ENCODE measurements at regions of chr1 and their contacts with region 1.

Region 1: DNA sequence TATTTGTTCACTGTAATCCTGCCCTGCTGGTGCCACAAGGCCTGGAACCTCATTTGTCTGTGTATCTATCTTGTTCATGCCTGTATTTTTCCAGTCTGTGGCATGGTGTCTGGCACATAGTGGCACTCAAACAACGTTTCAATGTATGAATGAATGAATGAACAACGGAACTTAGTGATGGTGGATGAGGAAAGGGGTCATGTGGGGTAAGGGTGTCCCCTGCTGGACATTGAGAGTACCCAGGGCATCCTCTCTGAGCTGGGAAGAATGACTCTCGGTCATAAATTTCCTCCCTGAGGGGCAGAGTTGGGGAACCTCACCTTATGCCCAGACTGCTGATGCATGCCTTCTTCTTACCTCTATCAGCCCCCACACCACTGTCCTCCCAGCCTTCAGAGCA is 18.9 kb upstream of the ZNF683 start:
- DNase-seq: peak; percentile 86
- H3K4me3 Mint-ChIP-seq: no peak overlapping the region
- H3K27ac Mint-ChIP-seq: no peak overlapping the region
- H3K4me1 Mint-ChIP-seq: peaks cover 41% of the 10 kb centered on the region
- H3K27me3 Mint-ChIP-seq: peaks cover 4% of the 10 kb centered on the region

Region 2: DNA sequence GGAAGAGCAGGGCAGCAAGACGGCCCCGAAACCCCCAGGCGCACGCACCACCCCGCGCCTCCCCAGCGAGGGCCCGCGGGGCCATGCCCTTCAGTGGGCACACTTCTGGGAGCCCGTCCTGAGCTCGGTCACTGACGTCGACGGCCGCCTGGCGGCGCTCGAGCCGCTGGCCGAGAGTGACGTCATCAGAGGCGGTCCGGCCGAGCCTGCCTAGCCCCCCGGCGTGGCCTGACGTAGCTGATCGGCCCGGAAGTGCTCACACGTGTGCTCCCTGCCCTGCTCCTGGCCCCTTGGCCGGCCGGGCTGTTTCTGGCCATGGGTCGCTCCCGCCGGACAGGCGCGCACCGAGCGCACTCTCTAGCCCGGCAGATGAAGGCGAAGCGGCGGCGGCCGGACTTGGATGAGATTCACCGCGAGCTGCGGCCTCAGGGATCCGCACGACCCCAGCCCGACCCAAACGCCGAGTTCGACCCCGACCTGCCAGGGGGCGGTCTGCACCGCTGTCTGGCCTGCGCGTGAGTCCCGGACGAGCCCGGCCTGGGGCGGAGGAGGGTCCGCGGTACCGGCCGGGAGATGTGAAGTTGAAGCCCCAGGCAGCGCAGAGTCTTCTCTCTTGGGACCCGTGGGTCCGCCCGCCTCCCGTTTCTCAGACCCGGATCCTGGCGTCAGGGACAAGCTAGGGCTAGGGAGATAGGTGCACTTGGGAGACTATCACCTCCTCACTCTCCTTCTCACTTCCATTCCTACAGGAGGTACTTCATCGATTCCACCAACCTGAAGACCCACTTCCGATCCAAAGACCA is 221.6 kb before region 1 on chr1 and contains the start of gene ZNF593:
- intact Hi-C with region 1: loop called (anchors 10 kb)
- DNase-seq: peak; percentile 97
- H3K4me3 Mint-ChIP-seq: peak within 1 kb of the TSS; percentile 96
- H3K27ac Mint-ChIP-seq: peak within 1 kb of the TSS; percentile 92
- H3K4me1 Mint-ChIP-seq: peaks cover 27% of the 10 kb centered on the region
- H3K27me3 Mint-ChIP-seq: peaks cover 9% of the 10 kb centered on the region
- total RNA-seq, gene ZNF593: 84.0 and 87.1 TPM in 2 replicates

Region 3: DNA sequence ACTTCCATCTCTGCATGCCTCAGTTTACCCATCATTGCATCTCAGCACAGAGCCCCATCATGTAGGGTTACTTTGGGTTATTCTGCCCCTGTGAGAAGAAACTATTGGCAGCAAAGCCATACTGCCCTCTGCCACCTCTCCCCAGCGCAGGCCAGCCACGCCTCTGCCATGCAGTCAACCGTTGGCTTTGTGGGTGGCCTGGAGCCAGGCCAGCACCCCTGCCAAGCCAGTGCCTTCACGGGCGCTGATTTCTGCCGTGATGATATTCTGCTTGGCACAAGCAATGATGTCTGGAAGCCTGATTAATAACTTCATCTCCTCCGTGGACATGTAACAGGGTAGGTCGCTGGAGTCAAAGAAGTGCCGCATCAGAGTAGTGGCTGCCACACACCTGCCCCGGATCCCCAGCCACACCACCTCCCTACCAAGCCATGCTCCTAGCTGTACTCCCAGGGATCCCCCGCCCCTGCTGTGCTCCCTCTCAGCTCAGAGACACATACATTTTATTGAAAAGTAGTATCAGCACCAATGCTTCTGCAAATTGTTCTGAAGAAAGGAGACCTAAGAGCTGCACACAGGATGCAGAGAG is 172.4 kb before region 1 on chr1:
- intact Hi-C with region 1: no loop called
- DNase-seq: no peak
- H3K4me3 Mint-ChIP-seq: no peak overlapping the region
- H3K27ac Mint-ChIP-seq: no peak overlapping the region
- H3K4me1 Mint-ChIP-seq: no peaks in the 10 kb centered on the region
- H3K27me3 Mint-ChIP-seq: peaks cover 13% of the 10 kb centered on the region

Region 4: GRCh38 chr1:26281971-26282370 is 109.5 kb before region 1 on chr1:
- intact Hi-C with region 1: no loop called
- DNase-seq: peak; percentile 60
- H3K4me3 Mint-ChIP-seq: peak overlapping the region; percentile 96
- H3K27ac Mint-ChIP-seq: peak overlapping the region; percentile 80
- H3K4me1 Mint-ChIP-seq: peaks cover 73% of the 10 kb centered on the region
- H3K27me3 Mint-ChIP-seq: no peaks in the 10 kb centered on the region

Region 5: DNA sequence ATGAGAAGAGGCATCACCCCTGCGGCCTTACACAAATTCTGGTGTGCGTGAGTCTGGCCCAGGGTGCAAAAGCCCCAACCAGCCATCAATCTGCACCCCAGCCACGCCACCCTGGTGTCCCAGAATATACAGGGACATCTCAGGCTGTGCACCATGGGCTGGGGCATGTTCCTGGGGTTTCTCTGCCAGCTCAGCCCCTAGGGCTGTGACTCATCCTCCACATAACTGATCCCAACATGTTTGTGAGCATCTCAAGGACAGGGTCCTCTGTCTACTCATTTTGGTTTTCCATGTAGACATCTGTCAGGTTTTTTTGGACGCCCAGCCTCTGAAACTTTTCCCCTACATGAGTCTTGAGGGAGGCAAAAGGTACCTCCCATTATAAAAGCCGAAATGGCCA is 19.4 kb before region 1 on chr1:
- intact Hi-C with region 1: loop called (anchors 2 kb)
- DNase-seq: no peak
- H3K4me3 Mint-ChIP-seq: peak overlapping the region; percentile 33
- H3K27ac Mint-ChIP-seq: peak overlapping the region; percentile 74
- H3K4me1 Mint-ChIP-seq: peaks cover 61% of the 10 kb centered on the region
- H3K27me3 Mint-ChIP-seq: no peaks in the 10 kb centered on the region

Region 6: DNA sequence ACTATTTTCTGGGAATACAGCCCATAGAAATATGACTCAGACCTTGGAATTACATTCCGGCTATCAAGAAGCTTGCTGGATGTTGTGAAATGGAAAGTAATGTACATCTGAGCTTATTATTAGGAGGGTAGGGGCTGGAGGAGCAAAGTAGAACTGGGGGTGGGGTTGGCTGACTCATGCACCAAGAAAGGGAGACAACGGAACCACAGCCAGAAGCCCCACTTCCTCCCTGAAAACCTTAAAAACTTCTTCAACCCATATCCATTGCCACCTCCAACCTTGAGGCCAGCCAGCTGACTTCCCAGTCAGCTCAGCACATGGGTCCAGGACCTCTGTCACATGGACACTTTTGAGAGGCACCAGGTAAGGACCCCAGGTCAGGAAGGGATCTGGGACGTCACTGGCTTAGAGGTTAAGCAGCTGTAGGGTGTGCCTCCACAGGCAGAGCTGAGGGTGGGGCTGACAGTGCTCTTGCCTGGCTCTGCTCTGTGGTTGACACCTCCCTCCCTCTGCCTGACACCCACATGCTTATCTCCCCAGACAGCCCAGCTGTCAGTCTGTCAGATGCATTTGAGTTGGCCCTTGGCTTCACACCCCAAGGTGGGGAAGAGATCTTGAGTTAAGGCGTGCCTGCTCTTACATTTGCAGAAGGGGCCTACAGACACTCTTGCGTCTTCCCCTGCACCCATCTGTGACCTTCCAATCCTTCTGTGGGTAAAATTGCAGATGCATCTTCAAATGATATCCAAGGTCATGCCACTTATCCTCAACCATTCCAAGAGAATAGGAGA is 13.2 kb before region 1 on chr1:
- intact Hi-C with region 1: loop called (anchors 1 kb)
- DNase-seq: peak; percentile 94
- H3K4me3 Mint-ChIP-seq: peak overlapping the region; percentile 75
- H3K27ac Mint-ChIP-seq: peak overlapping the region; percentile 88
- H3K4me1 Mint-ChIP-seq: peaks cover 57% of the 10 kb centered on the region
- H3K27me3 Mint-ChIP-seq: no peaks in the 10 kb centered on the region

Region 7: DNA sequence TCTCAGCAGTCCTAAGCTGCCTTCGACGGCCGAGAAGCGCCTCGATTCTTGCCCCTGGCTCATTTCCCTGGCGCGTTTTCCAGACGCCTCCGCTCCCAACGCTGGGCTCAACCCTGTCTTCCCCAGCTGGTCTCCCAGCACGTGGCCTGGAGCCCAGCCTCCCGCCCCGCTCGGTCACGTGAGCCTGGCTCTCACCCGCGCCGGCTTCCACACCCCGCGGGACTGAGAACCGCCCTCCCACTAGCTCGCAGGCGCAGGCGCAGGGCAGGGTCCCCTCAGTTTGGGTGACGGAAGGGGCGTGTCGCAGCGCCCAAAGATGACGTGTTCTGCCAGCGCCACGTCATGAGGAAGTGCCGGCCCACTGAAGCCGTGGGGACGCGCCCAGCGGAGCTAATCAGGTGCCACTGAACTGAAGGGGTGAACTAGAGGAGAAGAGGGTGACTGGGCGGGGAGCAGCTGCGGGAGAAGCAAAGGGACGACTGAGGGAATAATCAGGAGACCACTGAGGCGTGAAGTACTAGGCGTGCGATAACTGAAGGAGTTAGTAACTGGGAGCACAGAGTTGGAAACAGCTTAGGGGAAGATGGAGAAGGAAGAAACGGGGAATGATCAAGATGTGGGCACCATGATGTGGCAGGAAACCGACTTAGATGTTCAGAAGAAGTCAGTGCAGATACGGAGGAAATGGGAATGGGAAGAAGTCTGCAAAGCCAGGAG is 40.7 kb after region 1 on chr1 and contains the start of gene DHDDS:
- intact Hi-C with region 1: no loop called
- DNase-seq: peak; percentile 100
- H3K4me3 Mint-ChIP-seq: peak within 1 kb of the TSS; percentile 98
- H3K27ac Mint-ChIP-seq: peak within 1 kb of the TSS; percentile 95
- H3K4me1 Mint-ChIP-seq: peaks cover 17% of the 10 kb centered on the region
- H3K27me3 Mint-ChIP-seq: peaks cover 5% of the 10 kb centered on the region
- total RNA-seq, gene DHDDS: 57.0 and 60.2 TPM in 2 replicates